ENCODE measurements at regions of chr1 and their contacts with region 1.

Region 1: DNA sequence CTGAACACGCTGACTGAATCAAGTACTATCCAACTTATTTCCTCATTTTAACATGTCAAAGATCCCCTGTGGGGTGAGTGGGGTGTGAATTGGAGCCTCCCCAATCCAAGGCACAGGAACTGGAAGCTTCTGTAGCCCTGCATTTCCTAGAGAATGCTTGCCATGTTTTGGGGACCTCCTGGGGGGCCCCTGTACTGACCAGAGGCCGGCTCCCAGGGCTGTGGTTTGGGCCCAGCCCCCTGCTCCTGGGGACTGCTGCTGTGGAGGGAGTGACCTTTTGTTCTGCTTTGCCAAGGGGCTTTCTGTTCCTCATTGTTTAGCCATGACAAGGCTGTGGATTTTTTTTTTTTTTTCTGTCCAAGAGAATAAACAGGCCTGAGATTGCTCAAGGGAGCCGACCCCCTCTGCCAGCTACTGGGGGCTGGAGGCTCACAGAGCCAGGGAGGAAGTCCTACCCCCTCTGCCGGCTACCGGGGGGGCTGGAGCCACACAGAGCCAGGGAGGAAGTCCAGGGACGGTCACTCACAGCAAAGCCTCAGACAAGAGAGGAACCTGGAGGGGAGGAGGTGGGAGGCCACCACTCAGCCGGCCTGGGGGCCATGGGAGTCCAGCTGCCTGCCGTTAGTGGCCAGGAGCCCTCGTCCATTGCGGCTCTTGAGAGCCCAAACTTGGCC is 17.4 kb downstream of the TNFRSF1B start:
- DNase-seq: peak; percentile 94

Region 2: DNA sequence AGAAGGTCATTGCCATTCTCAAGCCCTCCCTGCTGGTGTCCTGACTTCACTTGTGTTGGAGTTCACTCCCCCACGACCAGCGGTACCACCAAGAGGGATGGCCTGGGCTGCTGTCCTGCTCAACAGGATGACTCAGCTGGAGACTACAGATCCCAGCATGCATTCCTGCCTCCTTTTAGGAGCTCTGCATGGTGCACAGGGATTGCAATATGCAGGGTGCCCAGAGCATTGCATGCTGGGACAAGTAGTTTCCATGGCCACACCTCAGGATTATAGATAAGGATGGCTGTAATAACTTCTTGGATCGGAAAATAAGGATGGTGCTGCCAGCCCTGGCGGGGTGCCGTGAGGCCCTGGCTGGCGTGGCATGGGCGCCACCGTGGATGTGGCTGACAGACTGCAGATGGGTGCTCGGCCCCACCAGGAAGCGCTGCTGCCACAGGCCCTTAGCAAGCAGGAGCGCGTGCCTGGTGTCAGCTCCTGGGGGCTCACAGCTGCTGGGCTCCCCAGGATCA is 1537.7 kb before region 1 on chr1:
- intact Hi-C with region 1: loop called in 1 of 2 experiments (anchors 10 kb)
- DNase-seq: no peak

Region 3: GRCh38 chr1:11929849-11930248 is 254.3 kb before region 1 on chr1:
- intact Hi-C with region 1: no loop called
- DNase-seq: peak; percentile 90

Measured in posterior vena cava (tissue), 2 donors.